ENCODE measurements at regions of chr19 and their contacts with region 1.

Region 1: DNA sequence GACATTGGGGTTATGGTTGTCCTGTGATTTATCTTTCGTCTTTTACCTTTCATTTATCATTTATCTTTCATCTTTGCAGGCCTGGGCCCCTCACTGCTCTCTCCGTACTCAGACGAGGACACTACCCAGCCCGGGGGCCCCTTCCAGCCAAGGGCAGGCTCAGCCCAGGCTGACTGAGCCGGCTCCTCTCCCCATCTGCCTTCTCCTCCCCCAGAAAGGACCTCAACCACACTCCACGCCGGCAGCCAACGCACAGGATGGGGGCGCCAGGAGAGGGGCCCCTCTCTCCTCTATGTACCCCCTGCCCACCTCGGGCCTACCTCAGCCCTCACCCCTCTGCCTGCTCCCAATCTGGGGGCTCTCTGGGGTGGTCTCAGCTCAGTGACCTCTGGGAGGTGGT is 7.4 kb upstream of the PPP5C start:
- DNase-seq: no peak
- ATAC-seq: peak in 1 of 8 donors; percentile 1
- H3K4me3 ChIP-seq: no peak overlapping the region
- H3K27ac ChIP-seq: no peak overlapping the region
- H3K4me1 ChIP-seq: no peaks in the 10 kb centered on the region
- H3K27me3 ChIP-seq: no peaks in the 10 kb centered on the region
- CTCF ChIP-seq: no peak

Region 2: GRCh38 chr19:46308510-46308909 is 30.9 kb before region 1 on chr19:
- intact Hi-C with region 1: loop called in 2 of 10 experiments (anchors 5 kb)
- DNase-seq: no peak
- ATAC-seq: peak in 2 of 8 donors; percentile 4 to 12
- H3K4me3 ChIP-seq: no peak overlapping the region
- H3K27ac ChIP-seq: no peak overlapping the region
- H3K4me1 ChIP-seq: peaks cover 3 to 20% (median 15%) of the 10 kb centered on the region in 9 donors
- H3K27me3 ChIP-seq: no peaks in the 10 kb centered on the region
- CTCF ChIP-seq: no peak

Region 3: DNA sequence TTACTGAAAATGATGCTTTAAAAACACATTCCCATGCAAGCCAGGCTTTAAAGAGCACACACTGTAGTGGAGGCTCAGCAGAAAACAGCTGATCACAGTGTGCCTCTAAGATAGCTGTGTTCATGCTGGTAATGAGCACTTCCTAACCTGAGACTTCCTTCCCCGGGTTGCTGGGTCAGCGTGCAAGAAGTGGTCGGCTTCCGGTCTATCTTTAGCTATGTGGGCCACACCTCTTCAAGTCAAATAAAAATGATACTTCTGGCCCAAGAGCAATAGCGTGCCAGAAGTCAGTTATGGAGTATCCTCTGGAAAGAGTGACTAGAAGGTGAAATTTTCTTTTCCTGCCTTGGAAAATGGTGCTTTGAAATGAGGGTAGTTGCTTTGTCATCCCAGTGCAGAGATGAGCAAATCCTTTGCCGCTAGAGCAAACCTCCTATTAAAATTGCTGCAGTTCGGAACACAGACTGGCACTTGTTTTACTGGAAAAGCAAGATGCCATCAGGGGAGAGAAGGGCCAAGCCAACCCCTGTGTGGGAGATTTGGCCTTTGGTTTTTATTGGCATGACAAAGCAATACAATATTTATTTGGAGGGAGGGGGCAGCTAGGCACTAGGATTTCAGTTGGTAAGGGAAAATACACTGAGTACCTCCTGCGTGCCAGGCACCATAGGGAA is 585.6 kb after region 1 on chr19:
- intact Hi-C with region 1: no loop called
- DNase-seq: peak in 1 of 2 donors; percentile 27
- ATAC-seq: peak; percentile 44 to 80 (median 70)
- H3K4me3 ChIP-seq: peak overlapping the region in 1 of 10 donors; percentile 4
- H3K27ac ChIP-seq: peak overlapping the region in 9 of 10 donors; percentile 22 to 80 (median 54)
- H3K4me1 ChIP-seq: peaks cover 13 to 68% (median 60%) of the 10 kb centered on the region in 9 donors
- H3K27me3 ChIP-seq: no peaks in the 10 kb centered on the region
- CTCF ChIP-seq: no peak

Region 4: GRCh38 chr19:47357788-47358680 is 1018.6 kb after region 1 on chr19:
- intact Hi-C with region 1: loop called in 1 of 10 experiments (anchors 5 kb)
- DNase-seq: no peak
- ATAC-seq: peak in 1 of 8 donors; percentile 11
- H3K4me3 ChIP-seq: no peak overlapping the region
- H3K27ac ChIP-seq: no peak overlapping the region
- H3K4me1 ChIP-seq: peaks cover 0 to 7% (median 0%) of the 10 kb centered on the region in 9 donors
- H3K27me3 ChIP-seq: no peaks in the 10 kb centered on the region
- CTCF ChIP-seq: no peak